Gastrocnemius medialis (tissue), 4 donors: ENCODE measurements at regions of chrX and their contacts with region 1.

Region 1: GRCh38 chrX:49199906-49200771 is at the start of gene SYP:
- DNase-seq: peak; percentile 70 to 82
- ATAC-seq: peak; percentile 95 to 97
- H3K4me3 ChIP-seq: peak within 1 kb of the TSS; percentile 6 to 45 (median 38)
- H3K27ac ChIP-seq: peak within 1 kb of the TSS; percentile 44 to 60 (median 53)
- H3K4me1 ChIP-seq: peaks cover 2 to 3% of the 10 kb centered on the region in 2 donors
- H3K27me3 ChIP-seq: no peaks in the 10 kb centered on the region
- CTCF ChIP-seq: no peak
- POLR2A ChIP-seq: peak; percentile 34 to 53
- total RNA-seq, gene SYP: 0.15 to 3.9 (median 0.40) TPM

Region 2: GRCh38 chrX:49237060-49237459 is 36.9 kb after region 1 on chrX:
- in situ Hi-C with region 1: no loop called
- intact Hi-C with region 1: loop called (anchors 5 kb)
- DNase-seq: no peak
- ATAC-seq: no peak
- H3K4me3 ChIP-seq: no peak overlapping the region
- H3K27ac ChIP-seq: no peak overlapping the region
- H3K4me1 ChIP-seq: peaks cover 0 to 5% of the 10 kb centered on the region in 2 donors
- H3K27me3 ChIP-seq: no peaks in the 10 kb centered on the region
- CTCF ChIP-seq: no peak
- POLR2A ChIP-seq: no peak

Region 3: DNA sequence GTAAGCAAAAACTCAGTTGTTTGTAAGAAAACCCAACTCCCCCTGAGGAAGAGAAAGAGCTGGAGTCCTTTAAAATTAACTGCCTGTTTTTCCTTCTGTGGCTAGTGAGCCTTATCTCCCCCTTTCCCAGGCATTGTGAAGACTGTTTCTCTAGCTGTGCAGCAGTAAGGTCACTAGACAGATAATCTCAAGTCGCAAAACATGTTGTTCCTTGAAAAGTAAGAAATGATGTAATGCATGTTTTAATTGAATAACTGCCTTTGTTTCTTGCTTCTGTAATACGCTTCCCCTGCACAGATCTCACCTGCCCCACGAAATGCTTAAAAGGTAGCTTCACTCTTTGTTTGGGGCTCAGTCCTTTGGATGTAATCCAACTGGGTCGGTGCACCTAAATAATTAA is 115.9 kb after region 1 on chrX:
- in situ Hi-C with region 1: no loop called
- intact Hi-C with region 1: no loop called
- DNase-seq: no peak
- ATAC-seq: no peak
- H3K4me3 ChIP-seq: no peak overlapping the region
- H3K27ac ChIP-seq: no peak overlapping the region
- H3K4me1 ChIP-seq: no peaks in the 10 kb centered on the region
- H3K27me3 ChIP-seq: no peaks in the 10 kb centered on the region
- CTCF ChIP-seq: no peak
- POLR2A ChIP-seq: no peak

Region 4: GRCh38 chrX:50707405-50707804 is 1507.3 kb after region 1 on chrX:
- in situ Hi-C with region 1: no loop called
- intact Hi-C with region 1: no loop called
- DNase-seq: no peak
- ATAC-seq: no peak
- H3K4me3 ChIP-seq: no peak overlapping the region
- H3K27ac ChIP-seq: no peak overlapping the region
- H3K4me1 ChIP-seq: no peaks in the 10 kb centered on the region
- H3K27me3 ChIP-seq: peaks cover 0 to 6% (median 0%) of the 10 kb centered on the region in 3 donors
- CTCF ChIP-seq: no peak
- POLR2A ChIP-seq: no peak